Right cardiac atrium (tissue), 5 donors: ENCODE measurements at regions of chr3 and their contacts with region 1.

Region 1: GRCh38 chr3:69739204-69740102 is at the start of gene MITF:
- DNase-seq: peak; percentile 95 to 97 (median 97)
- ATAC-seq: peak; percentile 99
- H3K4me3 ChIP-seq: peak within 1 kb of the TSS; percentile 63
- H3K27ac ChIP-seq: peak within 1 kb of the TSS; percentile 73
- H3K4me1 ChIP-seq: peaks cover 2% of the 10 kb centered on the region
- H3K27me3 ChIP-seq: no peaks in the 10 kb centered on the region
- total RNA-seq, gene MITF: 48.3 to 75.3 (median 58.4) TPM

Region 2: DNA sequence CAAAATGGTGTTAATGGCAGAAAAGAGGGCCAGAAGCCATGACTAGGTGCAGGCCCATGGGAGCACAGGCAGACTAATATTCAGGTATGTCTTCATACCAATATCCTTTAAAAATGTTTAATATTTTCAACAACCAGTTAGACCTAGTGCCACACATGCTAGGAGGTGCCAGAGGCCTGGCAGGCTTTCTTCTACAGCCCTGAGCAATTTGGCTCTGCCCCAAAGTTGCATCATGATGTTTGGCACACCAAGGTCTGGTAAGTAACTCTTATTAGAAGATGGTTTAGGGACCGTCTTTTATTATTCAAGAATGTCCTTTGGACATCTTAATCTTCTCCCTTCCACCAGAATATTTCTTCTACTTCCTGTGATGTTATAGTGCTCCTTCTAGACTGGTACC is 34.6 kb after region 1 on chr3:
- intact Hi-C with region 1: no loop called
- DNase-seq: peak; percentile 61 to 73 (median 69)
- ATAC-seq: peak in 1 of 2 donors; percentile 62
- H3K4me3 ChIP-seq: no peak overlapping the region
- H3K27ac ChIP-seq: no peak overlapping the region
- H3K4me1 ChIP-seq: peaks cover 5% of the 10 kb centered on the region
- H3K27me3 ChIP-seq: no peaks in the 10 kb centered on the region

Region 3: GRCh38 chr3:69784954-69785514 is 45.6 kb after region 1 on chr3:
- intact Hi-C with region 1: loop called in 3 of 4 experiments (anchors 2 to 10 kb)
- DNase-seq: peak; percentile 57 to 80 (median 75)
- ATAC-seq: peak; percentile 78 to 89
- H3K4me3 ChIP-seq: no peak overlapping the region
- H3K27ac ChIP-seq: peak overlapping the region; percentile 86
- H3K4me1 ChIP-seq: peaks cover 8% of the 10 kb centered on the region
- H3K27me3 ChIP-seq: no peaks in the 10 kb centered on the region